Aorta (tissue), 5 donors: ENCODE measurements at regions of chr13 and their contacts with region 1.

Region 1: DNA sequence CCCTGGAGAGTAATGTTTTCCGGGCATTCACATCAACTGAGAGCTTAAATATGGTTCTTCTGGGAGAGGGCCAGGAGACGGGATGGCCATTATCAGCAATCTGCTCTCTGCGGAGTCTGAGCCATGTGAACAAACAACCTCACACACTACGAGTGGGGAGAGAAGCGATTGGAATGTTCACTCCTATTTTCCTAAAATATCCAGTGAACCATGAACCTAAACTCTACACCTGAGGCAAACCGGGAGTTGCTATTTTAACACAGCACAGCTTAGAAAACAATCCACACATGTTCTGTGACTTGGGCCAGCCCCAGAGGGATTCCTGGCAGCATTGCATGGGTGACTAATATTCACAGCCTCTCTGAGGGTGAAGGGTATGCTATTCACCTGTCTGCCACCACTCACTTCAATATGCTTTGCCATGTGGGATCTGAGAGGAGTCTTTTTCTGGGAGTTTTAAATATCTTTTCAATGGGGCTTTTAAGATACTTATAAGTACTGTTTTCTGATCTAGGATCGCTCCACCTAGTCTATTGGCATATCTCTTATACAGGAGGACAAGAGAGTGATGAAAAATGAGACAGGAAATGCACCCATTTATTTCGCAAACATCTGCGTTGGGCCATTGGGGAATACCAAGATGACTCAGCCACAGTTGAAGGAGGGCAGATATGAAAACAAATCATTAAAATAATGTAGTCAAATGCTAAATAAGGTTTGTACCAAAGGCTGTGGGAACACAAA is 72.6 kb upstream of the SERP2 start:
- DNase-seq: peak in 1 of 2 donors; percentile 65
- ATAC-seq: peak; percentile 74
- H3K4me3 ChIP-seq: no peak overlapping the region
- H3K27ac ChIP-seq: peak overlapping the region; percentile 7 to 75
- H3K4me1 ChIP-seq: peaks cover 3 to 4% of the 10 kb centered on the region in 2 donors
- H3K27me3 ChIP-seq: no peaks in the 10 kb centered on the region

Region 2: DNA sequence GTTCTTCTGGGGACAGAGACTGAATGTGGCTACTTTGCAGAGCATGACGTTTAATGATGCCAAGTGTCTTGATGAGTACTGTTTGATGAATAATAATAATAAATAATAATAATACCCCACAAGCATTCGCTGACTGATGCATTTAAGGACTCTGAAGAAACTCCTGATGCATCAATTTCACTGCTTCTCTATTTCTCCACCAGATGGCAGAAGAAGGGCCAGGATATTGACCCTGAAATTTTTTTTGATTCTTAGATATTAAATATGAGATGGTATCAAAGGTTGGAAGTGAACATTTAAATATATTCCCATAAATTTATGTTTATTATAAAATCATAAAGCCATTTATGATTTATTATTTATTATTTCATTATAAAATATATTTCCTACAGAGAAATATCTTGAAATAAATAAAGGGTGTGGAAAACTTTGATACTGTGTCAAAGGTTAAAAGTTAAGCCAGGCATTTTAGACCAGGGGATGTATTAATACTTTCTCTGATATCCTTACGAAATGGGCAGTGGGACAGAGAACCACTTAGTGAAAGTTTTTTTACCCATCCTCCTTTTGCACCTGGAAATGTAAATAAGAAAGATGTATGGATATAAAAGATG is 250.5 kb before region 1 on chr13:
- intact Hi-C with region 1: loop called in 1 of 2 experiments (anchors 10 kb)
- DNase-seq: no peak
- ATAC-seq: no peak
- H3K4me3 ChIP-seq: no peak overlapping the region
- H3K27ac ChIP-seq: no peak overlapping the region
- H3K4me1 ChIP-seq: peaks cover 3 to 5% of the 10 kb centered on the region in 2 donors
- H3K27me3 ChIP-seq: no peaks in the 10 kb centered on the region

Region 3: DNA sequence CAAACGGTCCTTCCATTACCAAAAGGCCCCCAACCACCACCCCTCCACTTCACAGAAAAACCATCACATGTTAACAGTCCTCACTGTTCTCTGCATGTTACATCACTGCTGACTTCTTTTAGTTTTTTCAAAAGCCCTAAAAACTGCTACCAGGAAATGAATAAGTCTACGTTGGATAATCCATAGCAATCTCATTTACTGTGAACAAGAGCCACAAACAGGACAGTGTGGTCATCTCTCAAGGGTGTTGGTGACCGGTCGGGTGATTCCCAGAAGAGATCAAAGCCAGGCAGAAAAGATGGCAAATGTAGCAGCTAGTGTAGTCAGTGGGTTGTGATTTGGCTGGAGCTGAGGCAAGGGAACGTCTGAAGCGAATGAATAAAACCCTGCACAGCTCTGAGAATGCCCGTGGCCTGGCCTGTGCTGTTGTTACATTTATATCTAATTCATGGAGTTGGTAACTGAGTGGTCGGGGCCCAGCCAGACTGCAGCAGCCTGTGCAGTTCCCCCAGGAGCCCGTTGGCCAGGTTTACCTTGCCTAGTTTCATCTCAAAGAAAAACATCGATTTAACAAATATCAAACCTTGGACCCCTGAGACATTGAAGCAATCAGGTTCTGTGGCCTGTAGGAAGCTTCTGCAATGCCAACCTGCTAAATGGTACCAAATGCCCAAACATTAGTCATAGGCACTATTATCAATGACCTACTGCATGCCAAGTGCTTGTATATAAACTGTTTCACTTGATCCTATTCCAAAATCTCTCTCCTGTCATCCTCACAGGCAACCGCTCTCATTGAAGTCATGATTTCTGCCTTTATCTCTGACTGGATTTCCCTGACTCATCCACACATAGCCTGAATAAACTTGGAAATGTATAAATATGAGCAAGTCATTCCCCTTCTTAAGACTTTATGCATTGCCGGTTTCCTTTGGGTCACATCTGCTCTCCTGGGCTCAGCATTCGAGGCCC is 81.2 kb before region 1 on chr13:
- intact Hi-C with region 1: loop called in 1 of 2 experiments (anchors 5 kb)
- DNase-seq: no peak
- ATAC-seq: peak; percentile 33
- H3K4me3 ChIP-seq: no peak overlapping the region
- H3K27ac ChIP-seq: peak overlapping the region in 1 of 2 donors; percentile 62
- H3K4me1 ChIP-seq: peaks cover 1 to 4% of the 10 kb centered on the region in 2 donors
- H3K27me3 ChIP-seq: no peaks in the 10 kb centered on the region

Region 4: DNA sequence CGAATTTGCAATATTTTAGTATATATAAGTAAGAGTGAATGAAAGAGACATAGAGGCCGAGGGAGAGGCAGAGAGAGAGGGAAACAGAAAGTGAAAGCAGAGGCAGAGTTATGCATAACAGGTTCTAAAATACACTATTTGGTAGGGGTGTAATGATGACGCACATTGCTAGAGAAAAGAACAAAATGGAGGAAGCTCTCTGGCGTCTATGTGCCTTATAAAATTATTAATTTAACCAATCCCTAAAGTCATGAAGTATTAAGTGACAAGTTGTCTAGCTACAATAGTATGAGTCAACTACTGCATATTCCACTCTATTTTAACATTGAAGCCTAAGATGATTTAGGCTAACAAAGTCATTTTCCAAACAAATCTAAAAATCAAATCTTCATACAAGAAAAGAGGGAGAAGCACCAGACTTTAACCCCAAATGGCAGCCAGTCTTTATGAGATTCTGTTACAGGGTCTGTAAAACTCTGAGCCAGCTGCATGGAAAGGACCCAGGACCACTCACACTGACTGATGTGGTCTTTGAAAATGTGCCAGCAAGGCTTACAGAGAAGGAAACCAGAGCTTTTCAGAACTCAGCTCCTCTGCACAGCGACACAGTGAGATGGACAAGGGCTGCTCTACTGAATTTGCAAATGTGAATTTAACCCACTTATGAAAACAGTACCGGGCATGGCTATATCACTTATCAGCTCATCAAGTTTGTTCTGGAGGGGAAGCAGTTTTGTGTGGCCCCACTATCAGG is 26.4 kb before region 1 on chr13:
- intact Hi-C with region 1: loop called in 1 of 2 experiments (anchors 2 kb)
- DNase-seq: no peak
- ATAC-seq: peak; percentile 77
- H3K4me3 ChIP-seq: no peak overlapping the region
- H3K27ac ChIP-seq: peak overlapping the region; percentile 89 to 94
- H3K4me1 ChIP-seq: peaks cover 5 to 11% of the 10 kb centered on the region in 2 donors
- H3K27me3 ChIP-seq: no peaks in the 10 kb centered on the region